ENCODE measurements at regions of chr7 and their contacts with region 1.

Region 1: GRCh38 chr7:95511716-95512260 is 26.0 kb downstream of the ASB4 start:
- DNase-seq: peak; percentile 67
- H3K4me3 Mint-ChIP-seq: no peak overlapping the region
- H3K27ac Mint-ChIP-seq: no peak overlapping the region
- H3K4me1 Mint-ChIP-seq: peaks cover 3% of the 10 kb centered on the region
- H3K27me3 Mint-ChIP-seq: peaks cover 20% of the 10 kb centered on the region

Region 2: GRCh38 chr7:95446618-95447017 is 65.2 kb before region 1 on chr7:
- CTCF ChIA-PET with region 1: no interaction called
- DNase-seq: no peak
- H3K4me3 Mint-ChIP-seq: no peak overlapping the region
- H3K27ac Mint-ChIP-seq: no peak overlapping the region
- H3K4me1 Mint-ChIP-seq: no peaks in the 10 kb centered on the region
- H3K27me3 Mint-ChIP-seq: peaks cover 3% of the 10 kb centered on the region

Region 3: GRCh38 chr7:95501261-95501832 is 10.4 kb before region 1 on chr7:
- CTCF ChIA-PET with region 1: interaction called, 11 read pairs
- DNase-seq: no peak
- H3K4me3 Mint-ChIP-seq: no peak overlapping the region
- H3K27ac Mint-ChIP-seq: peak overlapping the region; percentile 57
- H3K4me1 Mint-ChIP-seq: peaks cover 30% of the 10 kb centered on the region
- H3K27me3 Mint-ChIP-seq: peaks cover 4% of the 10 kb centered on the region

Region 4: DNA sequence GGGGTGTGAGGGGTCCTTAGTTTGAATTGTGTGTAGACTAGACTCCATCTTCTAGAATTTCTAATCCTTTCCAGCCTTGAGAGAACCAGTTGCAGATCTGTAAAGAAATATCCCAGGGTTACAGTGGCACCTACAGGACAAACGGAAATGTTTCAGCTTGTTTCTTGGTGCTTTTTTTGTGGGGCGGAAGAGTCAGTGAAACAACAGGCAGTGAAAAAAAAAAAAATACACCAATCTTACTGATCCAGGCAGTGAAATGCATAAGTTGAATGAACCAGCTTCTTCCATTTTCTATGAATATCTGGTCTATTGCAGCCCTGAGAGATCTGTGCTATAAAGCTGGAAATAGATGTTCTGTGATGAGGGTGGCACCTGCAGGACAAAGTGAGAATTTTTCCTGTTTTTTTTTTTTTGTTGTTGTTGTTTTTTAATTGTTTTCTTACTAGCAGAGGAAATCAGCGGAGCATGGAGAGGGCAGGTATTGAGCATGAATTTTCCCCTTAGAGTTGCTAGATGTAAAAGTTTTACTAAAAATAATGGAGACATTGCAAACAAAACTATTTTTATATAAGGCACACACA is 178.7 kb after region 1 on chr7:
- CTCF ChIA-PET with region 1: interaction called, 86 read pairs
- DNase-seq: no peak
- H3K4me3 Mint-ChIP-seq: no peak overlapping the region
- H3K27ac Mint-ChIP-seq: no peak overlapping the region
- H3K4me1 Mint-ChIP-seq: no peaks in the 10 kb centered on the region
- H3K27me3 Mint-ChIP-seq: peaks cover 4% of the 10 kb centered on the region

Region 5: GRCh38 chr7:95871078-95871782 is 359.4 kb after region 1 on chr7:
- CTCF ChIA-PET with region 1: interaction called, 14 read pairs
- DNase-seq: peak; percentile 24
- H3K4me3 Mint-ChIP-seq: no peak overlapping the region
- H3K27ac Mint-ChIP-seq: no peak overlapping the region
- H3K4me1 Mint-ChIP-seq: no peaks in the 10 kb centered on the region
- H3K27me3 Mint-ChIP-seq: no peaks in the 10 kb centered on the region